Caco-2 (cell line): ENCODE measurements at regions of chr4 and their contacts with region 1.

Region 1: DNA sequence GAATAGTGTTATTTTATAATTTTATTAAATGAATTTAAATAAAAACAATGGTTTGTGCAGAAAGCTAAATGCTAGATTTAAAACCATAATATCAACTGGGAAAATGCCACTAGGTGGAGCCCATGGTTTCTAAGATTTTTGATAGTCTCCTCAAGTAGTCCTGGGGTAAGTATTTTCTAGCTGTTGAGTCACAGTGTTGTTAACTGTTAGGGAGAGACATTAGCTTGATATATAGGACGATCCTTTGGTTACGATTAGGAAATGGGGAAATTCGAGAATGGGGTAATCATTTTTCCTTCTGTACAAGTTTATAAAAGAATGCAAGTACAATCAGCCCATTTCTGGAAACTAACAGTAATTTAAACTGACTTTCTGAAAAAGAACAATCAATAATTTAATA is 378.4 kb downstream of the ANKRD50 start:
- DNase-seq: peak in 1 of 2 experiments; percentile 34
- H3K4me3 ChIP-seq: no peak overlapping the region
- H3K4me3 Mint-ChIP-seq: no peak overlapping the region
- H3K27ac Mint-ChIP-seq: no peak overlapping the region
- H3K4me1 ChIP-seq: no peaks in the 10 kb centered on the region
- H3K4me1 Mint-ChIP-seq: no peaks in the 10 kb centered on the region
- H3K27me3 ChIP-seq: no peaks in the 10 kb centered on the region
- H3K27me3 Mint-ChIP-seq: no peaks in the 10 kb centered on the region
- CTCF ChIP-seq: peak; percentile 26 to 35

Region 2: GRCh38 chr4:124515591-124515990 is 181.5 kb after region 1 on chr4:
- CTCF ChIA-PET with region 1: no interaction called
- POLR2A ChIA-PET with region 1: no interaction called
- intact Hi-C with region 1: loop called (anchors 5 kb)
- DNase-seq: peak in 1 of 2 experiments; percentile 17
- H3K4me3 ChIP-seq: no peak overlapping the region
- H3K4me3 Mint-ChIP-seq: no peak overlapping the region
- H3K27ac Mint-ChIP-seq: no peak overlapping the region
- H3K4me1 ChIP-seq: peaks cover 4% of the 10 kb centered on the region; the same call in 1 of the 2 replicates
- H3K4me1 Mint-ChIP-seq: no peaks in the 10 kb centered on the region
- H3K27me3 ChIP-seq: no peaks in the 10 kb centered on the region
- H3K27me3 Mint-ChIP-seq: no peaks in the 10 kb centered on the region
- CTCF ChIP-seq: no peak

Region 3: DNA sequence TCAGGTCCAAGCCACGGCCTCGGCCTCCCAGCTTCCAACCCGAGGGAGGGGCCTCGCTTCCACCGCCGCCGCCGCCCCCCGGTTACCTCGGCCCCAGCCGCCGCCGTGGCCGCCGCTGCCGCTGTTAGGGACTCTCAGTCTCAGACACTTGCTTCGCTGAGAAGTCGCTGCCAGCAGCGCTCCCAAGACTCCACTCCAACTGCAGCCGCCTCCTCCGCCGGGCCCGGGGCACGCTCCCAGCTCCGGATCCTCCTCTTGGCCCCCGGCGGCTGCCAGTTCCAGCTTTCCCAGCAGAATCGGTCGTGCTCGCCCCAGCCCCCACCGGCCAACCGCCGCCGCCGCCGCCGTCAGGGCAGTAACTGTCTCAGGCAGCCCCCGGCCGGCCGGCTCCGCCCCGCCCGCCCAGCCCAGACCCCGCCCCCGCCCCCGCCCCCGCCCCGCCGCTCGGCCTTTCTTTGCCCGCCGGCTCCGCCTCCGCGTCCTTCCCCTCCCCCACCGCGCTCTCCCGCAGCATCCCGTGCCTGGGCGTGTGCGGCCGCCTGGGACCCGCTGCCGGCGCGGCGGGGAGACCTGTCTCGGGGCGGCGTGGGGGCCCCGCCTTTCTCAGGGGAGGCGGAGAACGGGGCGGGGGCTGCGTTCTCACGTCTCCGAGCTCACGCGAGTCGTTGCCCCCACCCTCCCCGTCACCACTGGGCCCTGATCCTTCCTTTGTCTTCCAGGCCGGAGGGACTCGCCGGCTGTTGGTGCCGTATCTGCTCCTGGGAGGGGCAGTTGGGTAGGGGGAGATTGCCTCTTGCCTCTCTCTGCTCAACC is 378.5 kb after region 1 on chr4 and contains the start of gene ANKRD50:
- CTCF ChIA-PET with region 1: no interaction called
- POLR2A ChIA-PET with region 1: no interaction called
- intact Hi-C with region 1: loop called (anchors 2 kb)
- DNase-seq: peak; percentile 90
- H3K4me3 ChIP-seq: peak within 1 kb of the TSS; percentile 82
- H3K4me3 Mint-ChIP-seq: no peak within 1 kb of the TSS
- H3K27ac Mint-ChIP-seq: no peak within 1 kb of the TSS
- H3K4me1 ChIP-seq: peaks cover 9% of the 10 kb centered on the region
- H3K4me1 Mint-ChIP-seq: no peaks in the 10 kb centered on the region
- H3K27me3 ChIP-seq: no peaks in the 10 kb centered on the region
- H3K27me3 Mint-ChIP-seq: no peaks in the 10 kb centered on the region
- CTCF ChIP-seq: no peak
- total RNA-seq, gene ANKRD50: 7.0 and 7.7 TPM in 2 replicates

Region 4: GRCh38 chr4:125070484-125071260 is 736.6 kb after region 1 on chr4:
- CTCF ChIA-PET with region 1: no interaction called
- POLR2A ChIA-PET with region 1: no interaction called
- intact Hi-C with region 1: loop called (anchors 10 kb)
- DNase-seq: peak in 1 of 2 experiments; percentile 3
- H3K4me3 ChIP-seq: no peak overlapping the region
- H3K4me3 Mint-ChIP-seq: no peak overlapping the region
- H3K27ac Mint-ChIP-seq: no peak overlapping the region
- H3K4me1 ChIP-seq: no peaks in the 10 kb centered on the region
- H3K4me1 Mint-ChIP-seq: no peaks in the 10 kb centered on the region
- H3K27me3 ChIP-seq: no peaks in the 10 kb centered on the region
- H3K27me3 Mint-ChIP-seq: no peaks in the 10 kb centered on the region
- CTCF ChIP-seq: no peak

Region 5: DNA sequence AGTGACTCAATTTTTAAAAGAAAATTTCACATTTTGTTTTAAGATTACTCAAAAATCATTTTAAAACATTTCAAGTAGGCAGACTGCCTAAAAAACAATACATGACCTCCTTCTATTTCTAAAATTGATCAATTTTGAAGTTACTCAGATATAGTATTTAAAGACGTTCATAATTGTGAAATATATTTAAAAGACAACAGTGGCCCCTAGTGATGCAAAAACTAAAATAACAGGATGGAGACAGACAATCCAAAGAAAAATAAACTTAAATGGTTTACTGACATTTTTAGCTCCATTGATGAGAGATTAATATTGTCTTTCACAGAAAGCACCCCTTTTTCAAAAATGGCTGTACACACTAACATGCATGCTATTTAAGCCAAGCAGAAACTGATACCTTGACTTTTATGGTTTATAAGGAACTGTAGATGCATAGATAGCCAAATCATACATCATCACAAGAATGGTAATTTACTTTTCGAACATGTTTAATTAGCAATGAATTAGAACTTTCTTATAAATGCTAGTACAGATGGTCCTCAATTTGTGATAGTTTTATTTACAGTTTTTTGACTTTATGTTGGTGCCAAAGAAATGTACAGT is 910.8 kb after region 1 on chr4:
- CTCF ChIA-PET with region 1: no interaction called
- POLR2A ChIA-PET with region 1: no interaction called
- intact Hi-C with region 1: loop called (anchors 2 kb)
- DNase-seq: no peak
- H3K4me3 ChIP-seq: no peak overlapping the region
- H3K4me3 Mint-ChIP-seq: no peak overlapping the region
- H3K27ac Mint-ChIP-seq: no peak overlapping the region
- H3K4me1 ChIP-seq: no peaks in the 10 kb centered on the region
- H3K4me1 Mint-ChIP-seq: no peaks in the 10 kb centered on the region
- H3K27me3 ChIP-seq: no peaks in the 10 kb centered on the region
- H3K27me3 Mint-ChIP-seq: no peaks in the 10 kb centered on the region
- CTCF ChIP-seq: peak in 1 of 2 experiments; percentile 21

Region 6: GRCh38 chr4:125283707-125284279 is 949.7 kb after region 1 on chr4:
- CTCF ChIA-PET with region 1: interaction called, 4 read pairs
- POLR2A ChIA-PET with region 1: no interaction called
- intact Hi-C with region 1: loop called (anchors 1 kb)
- DNase-seq: no peak
- H3K4me3 ChIP-seq: no peak overlapping the region
- H3K4me3 Mint-ChIP-seq: no peak overlapping the region
- H3K27ac Mint-ChIP-seq: no peak overlapping the region
- H3K4me1 ChIP-seq: no peaks in the 10 kb centered on the region
- H3K4me1 Mint-ChIP-seq: no peaks in the 10 kb centered on the region
- H3K27me3 ChIP-seq: no peaks in the 10 kb centered on the region
- H3K27me3 Mint-ChIP-seq: no peaks in the 10 kb centered on the region
- CTCF ChIP-seq: peak; percentile 30 to 54